Ascending aorta (tissue), 2 donors: ENCODE measurements at regions of chr7 and their contacts with region 1.

Region 1: DNA sequence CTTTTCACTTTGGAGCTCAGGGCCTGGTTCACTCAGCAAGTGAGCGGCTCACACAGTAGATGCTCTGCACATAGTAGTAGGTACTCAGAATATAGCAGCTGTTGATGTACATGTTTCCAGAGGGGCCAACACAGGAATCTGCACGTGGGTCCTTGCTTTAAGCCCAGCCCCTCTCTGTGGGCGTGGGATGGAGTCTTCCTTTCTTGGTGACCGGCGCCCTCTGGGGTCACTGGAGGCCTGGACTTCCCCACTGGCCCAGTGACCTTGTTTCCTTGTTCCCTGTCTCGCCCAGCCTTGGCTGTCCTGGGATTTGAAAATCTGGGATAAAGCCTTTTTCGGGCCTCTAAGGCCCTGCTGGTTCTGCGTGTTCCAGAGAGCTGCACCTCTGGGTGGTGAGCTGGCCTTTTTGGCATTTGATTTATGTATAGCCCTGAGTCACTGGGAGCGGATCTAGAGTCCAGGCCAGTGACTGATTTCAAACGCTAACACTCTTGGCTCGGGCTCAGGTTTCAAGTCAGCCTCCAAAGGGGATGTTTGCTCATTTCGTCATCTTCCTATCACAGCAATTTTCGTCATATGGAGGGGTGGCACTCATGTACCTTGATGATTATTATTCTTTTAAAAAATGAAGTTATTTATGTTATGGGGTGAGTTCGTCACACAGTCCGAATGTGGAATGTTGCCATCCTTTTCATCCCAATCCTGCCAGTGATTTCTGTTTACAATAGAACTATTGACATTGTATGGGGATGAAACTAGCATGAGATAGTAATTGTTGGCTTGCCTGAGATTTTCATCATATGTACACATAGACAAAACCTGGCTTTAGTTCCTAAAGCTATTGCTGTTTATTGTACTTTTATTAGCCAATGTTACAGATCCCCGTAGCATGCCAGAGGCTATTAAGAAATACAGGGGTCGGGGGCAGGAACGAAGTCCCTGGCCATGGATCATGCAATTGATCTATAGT is 65.5 kb downstream of the CUX1 start:
- DNase-seq: peak; percentile 87 to 98
- H3K4me3 ChIP-seq: peak overlapping the region in 1 of 2 donors; percentile 17
- H3K27ac ChIP-seq: peak overlapping the region; percentile 86 to 89
- H3K4me1 ChIP-seq: peaks cover 17 to 50% of the 10 kb centered on the region in 2 donors
- H3K27me3 ChIP-seq: no peaks in the 10 kb centered on the region
- CTCF ChIP-seq: no peak

Region 2: DNA sequence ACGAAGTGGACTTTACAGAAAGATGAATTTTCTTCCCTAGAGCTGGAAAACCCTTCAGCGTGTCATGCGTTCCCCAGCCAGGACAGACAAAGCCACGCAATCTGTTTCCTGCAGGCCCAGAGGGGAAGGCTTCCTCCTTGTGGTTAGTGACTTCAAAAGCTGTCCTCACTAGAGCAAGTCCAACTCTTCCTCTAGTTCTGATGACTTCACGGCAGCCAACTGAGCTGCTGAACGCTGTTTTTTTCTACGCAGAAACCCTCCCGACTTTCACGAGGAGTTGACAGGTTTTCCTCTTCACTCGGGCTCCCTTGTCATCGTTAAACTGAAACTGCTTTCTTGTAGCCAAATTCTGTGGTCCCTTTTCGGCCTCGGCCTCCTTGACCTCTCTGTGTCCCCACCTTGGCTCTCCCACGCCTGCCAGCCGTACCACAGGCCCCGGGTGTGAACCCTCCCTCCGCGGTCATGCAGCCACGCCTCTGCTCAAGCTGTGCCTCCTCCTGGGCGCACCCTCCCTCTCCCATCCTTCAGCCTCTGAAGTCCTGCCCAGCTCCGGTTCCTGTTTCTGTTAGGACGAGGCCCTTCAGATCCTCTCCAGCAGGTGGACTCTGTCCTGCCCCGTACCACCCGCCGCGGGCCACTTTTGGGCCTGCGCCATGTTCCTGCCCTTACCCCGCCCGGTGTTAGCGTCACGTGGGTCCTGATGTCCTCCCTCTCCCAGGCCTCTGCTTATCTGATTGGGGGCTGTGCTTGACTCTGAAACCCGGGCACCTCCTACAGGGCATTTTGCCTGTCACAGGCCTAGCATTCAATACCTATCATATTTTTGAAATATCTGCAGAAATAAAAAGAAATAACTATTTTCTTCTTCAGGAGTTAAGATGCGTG is 26.2 kb before region 1 on chr7:
- intact Hi-C with region 1: loop called (anchors 2 kb)
- DNase-seq: peak; percentile 72 to 93
- H3K4me3 ChIP-seq: peak overlapping the region; percentile 41 to 53
- H3K27ac ChIP-seq: peak overlapping the region; percentile 87 to 90
- H3K4me1 ChIP-seq: peaks cover 7 to 29% of the 10 kb centered on the region in 2 donors
- H3K27me3 ChIP-seq: no peaks in the 10 kb centered on the region
- CTCF ChIP-seq: peak in 1 of 3 experiments; percentile 69

Region 3: DNA sequence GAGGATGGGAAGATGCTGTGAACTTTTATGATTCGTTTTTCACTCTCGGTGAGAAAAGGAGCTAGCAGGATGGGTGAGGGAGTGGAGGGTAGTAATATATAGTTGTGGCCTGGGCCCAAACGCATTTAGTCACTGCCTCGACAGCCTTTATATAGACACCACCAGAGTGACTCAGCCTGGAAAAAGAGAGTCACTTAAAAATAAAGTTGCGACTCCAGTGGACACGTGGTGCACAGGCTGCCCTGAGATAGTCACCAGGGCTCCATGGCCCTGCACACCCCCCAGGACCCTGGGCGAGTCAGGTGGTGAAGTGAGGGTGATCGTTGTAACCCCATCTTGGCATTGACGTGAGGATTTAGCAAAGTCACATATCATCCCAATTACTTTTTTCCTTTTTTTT is 41.3 kb after region 1 on chr7:
- intact Hi-C with region 1: loop called (anchors 1 kb)
- DNase-seq: peak; percentile 65 to 93
- H3K4me3 ChIP-seq: peak overlapping the region in 1 of 2 donors; percentile 56
- H3K27ac ChIP-seq: peak overlapping the region; percentile 89 to 95
- H3K4me1 ChIP-seq: peaks cover 7 to 25% of the 10 kb centered on the region in 2 donors
- H3K27me3 ChIP-seq: no peaks in the 10 kb centered on the region
- CTCF ChIP-seq: no peak

Region 4: GRCh38 chr7:101953248-101953819 is 70.5 kb after region 1 on chr7:
- intact Hi-C with region 1: loop called (anchors 5 kb)
- DNase-seq: peak in 1 of 2 donors; percentile 83
- H3K4me3 ChIP-seq: no peak overlapping the region
- H3K27ac ChIP-seq: peak overlapping the region; percentile 58 to 82
- H3K4me1 ChIP-seq: peaks cover 4 to 31% of the 10 kb centered on the region in 2 donors
- H3K27me3 ChIP-seq: no peaks in the 10 kb centered on the region
- CTCF ChIP-seq: no peak

Region 5: GRCh38 chr7:102061981-102062390 is 179.1 kb after region 1 on chr7:
- intact Hi-C with region 1: no loop called
- DNase-seq: peak in 1 of 2 donors; percentile 68
- H3K4me3 ChIP-seq: no peak overlapping the region
- H3K27ac ChIP-seq: no peak overlapping the region
- H3K4me1 ChIP-seq: no peaks in the 10 kb centered on the region
- H3K27me3 ChIP-seq: no peaks in the 10 kb centered on the region
- CTCF ChIP-seq: no peak

Region 6: GRCh38 chr7:102125127-102125561 is 242.3 kb after region 1 on chr7:
- intact Hi-C with region 1: loop called (anchors 10 kb)
- DNase-seq: peak; percentile 68 to 92
- H3K4me3 ChIP-seq: no peak overlapping the region
- H3K27ac ChIP-seq: peak overlapping the region; percentile 70 to 74
- H3K4me1 ChIP-seq: peaks cover 0 to 14% of the 10 kb centered on the region in 2 donors
- H3K27me3 ChIP-seq: no peaks in the 10 kb centered on the region
- CTCF ChIP-seq: peak in 2 of 3 experiments; percentile 23 to 40